ENCODE measurements at regions of chr10 and their contacts with region 1.

Region 1: DNA sequence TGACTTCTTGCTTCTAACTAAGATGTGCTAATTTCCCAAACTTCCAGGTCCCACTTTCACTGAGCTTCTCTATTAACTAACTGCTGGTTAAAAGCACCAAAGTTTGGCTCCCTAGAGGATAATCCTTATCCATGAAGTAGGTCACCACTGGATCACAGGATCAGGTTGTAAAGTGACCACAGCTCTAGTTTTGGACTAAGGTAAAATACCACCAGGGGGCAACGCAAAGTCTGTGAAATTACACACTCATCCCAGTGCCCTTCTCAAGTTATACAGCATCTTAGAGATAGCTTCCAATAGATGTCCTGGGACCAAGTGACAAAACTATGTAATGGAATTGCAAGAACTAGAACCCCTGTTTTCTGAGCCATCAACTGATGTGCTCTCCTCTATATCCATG is 116.4 kb upstream of the ASAH2 start:
- DNase-seq: peak; percentile 61
- H3K4me3 ChIP-seq: no peak overlapping the region
- H3K27ac ChIP-seq: no peak overlapping the region
- H3K4me1 ChIP-seq: peaks cover under 1% of the 10 kb centered on the region
- H3K27me3 ChIP-seq: no peaks in the 10 kb centered on the region
- CTCF ChIP-seq: peak; percentile 34 to 51
- POLR2A ChIP-seq: no peak

Region 2: GRCh38 chr10:50291261-50291850 is 76.4 kb before region 1 on chr10:
- CTCF ChIA-PET with region 1: no interaction called
- POLR2A ChIA-PET with region 1: no interaction called
- dilution Hi-C with region 1: no loop called
- intact Hi-C with region 1: no loop called
- DNase-seq: peak; percentile 18
- H3K4me3 ChIP-seq: no peak overlapping the region
- H3K27ac ChIP-seq: no peak overlapping the region
- H3K4me1 ChIP-seq: no peaks in the 10 kb centered on the region
- H3K27me3 ChIP-seq: peaks cover 5 to 10% of the 10 kb centered on the region in 2 experiments
- CTCF ChIP-seq: peak in 1 of 2 donors; percentile 25
- POLR2A ChIP-seq: no peak

Region 3: DNA sequence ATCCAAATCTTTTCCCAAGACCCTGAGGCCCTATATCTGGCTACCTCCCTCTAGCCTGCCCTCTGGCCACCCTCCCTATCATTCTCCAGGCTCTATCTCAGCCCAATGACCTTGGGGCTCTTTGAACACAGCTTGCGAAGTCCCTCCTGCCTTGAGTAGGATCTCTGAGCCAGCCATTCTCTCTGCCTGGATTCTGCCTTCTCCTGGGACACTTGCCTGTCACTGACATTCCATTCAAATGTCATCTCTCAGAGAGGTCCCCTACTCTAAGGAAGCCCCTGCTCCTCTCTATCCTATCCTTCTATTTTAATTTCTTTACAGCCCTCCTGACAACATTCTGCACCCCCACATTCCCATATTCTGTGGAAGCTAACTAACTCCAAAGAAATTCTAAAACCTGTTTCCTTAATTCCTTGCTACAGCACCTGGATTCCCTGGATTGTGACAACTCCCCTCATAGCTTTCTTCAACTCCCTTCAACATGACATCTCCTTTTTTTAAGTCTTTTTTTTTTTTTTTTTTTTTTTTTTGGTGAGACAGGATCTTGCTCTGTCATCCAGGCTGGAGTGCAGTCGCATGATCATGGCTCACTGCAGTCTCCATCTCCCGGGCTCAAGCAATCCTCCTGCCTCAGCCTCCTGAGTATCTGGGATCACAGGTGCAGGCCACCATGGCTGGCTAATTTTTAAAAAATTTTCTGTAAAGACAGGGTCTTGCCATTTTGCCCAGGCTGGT is 35.5 kb before region 1 on chr10:
- CTCF ChIA-PET with region 1: interaction called, 12 read pairs
- POLR2A ChIA-PET with region 1: no interaction called
- dilution Hi-C with region 1: no loop called
- intact Hi-C with region 1: no loop called
- DNase-seq: no peak
- H3K4me3 ChIP-seq: no peak overlapping the region
- H3K27ac ChIP-seq: no peak overlapping the region
- H3K4me1 ChIP-seq: peaks cover 2% of the 10 kb centered on the region
- H3K27me3 ChIP-seq: no peaks in the 10 kb centered on the region
- CTCF ChIP-seq: no peak
- POLR2A ChIP-seq: no peak

Region 4: GRCh38 chr10:50385624-50386023 is 17.9 kb after region 1 on chr10:
- CTCF ChIA-PET with region 1: interaction called, 23 read pairs
- POLR2A ChIA-PET with region 1: no interaction called
- dilution Hi-C with region 1: no loop called
- intact Hi-C with region 1: no loop called
- DNase-seq: no peak
- H3K4me3 ChIP-seq: no peak overlapping the region
- H3K27ac ChIP-seq: no peak overlapping the region
- H3K4me1 ChIP-seq: no peaks in the 10 kb centered on the region
- H3K27me3 ChIP-seq: no peaks in the 10 kb centered on the region
- CTCF ChIP-seq: no peak
- POLR2A ChIP-seq: no peak

Region 5: DNA sequence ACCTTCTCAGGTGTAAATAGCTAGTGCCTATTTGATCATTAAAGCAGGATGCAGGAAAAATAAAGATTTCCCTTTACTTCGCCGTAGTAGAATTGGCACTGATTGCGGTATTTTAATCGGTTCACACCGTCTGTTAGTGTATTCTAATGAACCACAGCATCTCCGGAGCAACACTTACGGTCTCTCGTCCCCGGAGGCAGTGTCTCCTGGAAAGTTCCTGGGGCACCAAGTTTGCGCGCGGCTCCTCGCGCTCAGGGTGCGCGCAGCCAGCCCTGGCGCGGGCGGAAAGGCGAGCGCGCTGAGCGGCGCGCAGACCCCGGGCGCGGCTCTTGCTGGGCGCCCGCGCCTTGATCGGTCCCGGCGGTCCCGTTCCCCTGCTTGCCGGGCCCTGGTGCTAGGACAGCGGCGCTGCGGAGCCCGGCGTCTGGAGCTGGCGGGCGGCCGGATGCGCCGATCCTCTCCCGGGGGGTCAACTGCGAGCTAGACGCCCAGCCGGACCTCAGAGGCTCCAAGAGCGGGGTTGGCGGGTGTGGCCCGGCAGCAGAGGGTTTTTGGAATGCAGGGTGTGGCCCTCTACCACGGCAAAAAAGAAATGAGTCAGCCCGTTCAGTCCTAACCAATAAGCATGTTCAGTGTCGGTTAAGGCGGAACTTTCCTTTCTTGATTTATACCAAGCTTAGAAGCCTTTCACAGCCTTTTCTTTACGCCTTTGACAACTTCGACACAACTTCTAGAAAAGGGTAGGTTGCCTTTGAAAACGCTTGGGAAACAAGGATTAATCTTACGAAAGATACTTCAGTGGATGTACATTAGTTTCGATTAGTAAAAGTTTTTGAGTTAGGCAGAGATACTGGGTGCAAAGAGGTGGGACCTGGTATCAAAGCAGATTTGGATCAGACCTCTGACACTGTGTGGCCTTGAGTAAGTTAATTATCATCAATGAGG is 50.4 kb after region 1 on chr10:
- CTCF ChIA-PET with region 1: interaction called, 68 read pairs
- POLR2A ChIA-PET with region 1: interaction called, 3 read pairs
- dilution Hi-C with region 1: no loop called
- intact Hi-C with region 1: loop called (anchors 1 kb)
- DNase-seq: peak; percentile 79
- H3K4me3 ChIP-seq: peak overlapping the region; percentile 25 to 86 (median 75)
- H3K27ac ChIP-seq: peak overlapping the region; percentile 47
- H3K4me1 ChIP-seq: peaks cover 14% of the 10 kb centered on the region
- H3K27me3 ChIP-seq: no peaks in the 10 kb centered on the region
- CTCF ChIP-seq: no peak
- POLR2A ChIP-seq: peak; percentile 63